AG04449 (cell line): ENCODE measurements at regions of chr19 and their contacts with region 1.

Region 1: GRCh38 chr19:2475702-2476450 is at the start of gene GADD45B:
- DNase-seq: peak; percentile 82
- H3K4me3 ChIP-seq: peak within 1 kb of the TSS; percentile 100
- CTCF ChIP-seq: no peak

Region 2: GRCh38 chr19:2438178-2438864 is 37.6 kb before region 1 on chr19:
- CTCF ChIA-PET with region 1: no interaction called
- POLR2A ChIA-PET with region 1: no interaction called
- DNase-seq: no peak
- H3K4me3 ChIP-seq: no peak overlapping the region
- CTCF ChIP-seq: no peak

Region 3: GRCh38 chr19:2455851-2456570 is 19.9 kb before region 1 on chr19:
- CTCF ChIA-PET with region 1: interaction called, 6 read pairs
- POLR2A ChIA-PET with region 1: interaction called, 27 read pairs
- DNase-seq: no peak
- H3K4me3 ChIP-seq: peak overlapping the region; percentile 81
- CTCF ChIP-seq: no peak

Region 4: DNA sequence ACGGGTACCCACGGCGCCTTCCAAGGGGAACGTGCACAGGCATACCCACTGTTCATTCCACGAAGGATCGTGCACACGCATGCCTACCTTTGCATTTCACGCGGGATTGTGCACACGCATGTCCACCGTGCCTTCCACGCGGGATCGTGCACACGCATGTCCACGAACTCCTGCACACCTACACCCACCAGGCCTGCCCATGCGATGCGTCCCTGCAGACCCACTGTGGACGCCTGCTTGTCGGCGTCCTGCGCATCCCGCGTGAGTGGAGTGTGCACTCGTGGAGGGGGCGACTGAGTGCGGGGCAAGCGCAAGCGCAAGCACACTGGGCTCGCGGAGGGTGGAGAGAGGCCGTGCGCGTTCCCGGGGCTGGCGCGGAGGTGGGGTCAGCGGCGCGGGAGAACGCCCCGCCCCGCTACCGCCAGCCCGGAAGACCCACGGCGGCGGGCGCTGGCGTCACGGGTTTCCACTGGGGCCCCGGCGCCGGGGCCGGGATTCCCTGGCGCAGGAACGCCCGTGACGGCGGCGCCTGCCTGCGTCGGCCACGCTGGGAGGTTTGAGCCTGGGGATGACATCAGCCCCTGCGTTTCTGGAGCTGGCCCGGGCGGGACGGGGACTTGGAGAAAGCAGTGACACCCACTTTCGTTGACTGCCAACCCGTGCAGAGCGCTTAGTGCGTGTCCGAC is 18.7 kb after region 1 on chr19:
- CTCF ChIA-PET with region 1: interaction called, 5 read pairs
- POLR2A ChIA-PET with region 1: interaction called, 79 read pairs
- DNase-seq: no peak
- H3K4me3 ChIP-seq: peak overlapping the region; percentile 65
- CTCF ChIP-seq: no peak

Region 5: DNA sequence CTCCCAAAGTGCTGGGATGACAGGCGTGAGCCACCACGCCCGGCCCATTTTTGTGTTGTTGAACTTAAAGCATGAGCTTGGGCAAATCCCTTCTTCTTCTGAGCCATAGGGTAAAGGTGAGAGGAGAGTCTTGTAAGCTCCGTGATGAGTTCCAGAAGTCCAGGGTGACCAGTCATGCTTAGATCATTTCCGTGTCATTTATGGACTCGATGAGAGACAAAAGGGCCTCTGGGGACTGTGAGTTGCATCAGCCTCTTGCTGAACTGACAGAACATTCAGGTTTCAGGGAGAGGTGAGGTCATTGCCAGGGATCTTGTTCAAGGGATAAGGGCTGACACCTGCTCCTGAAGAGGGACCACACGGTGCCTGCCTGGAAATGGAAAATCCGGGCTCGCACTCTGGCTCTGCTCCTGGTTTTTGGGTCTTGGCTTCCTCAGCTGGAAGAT is 53.6 kb after region 1 on chr19:
- CTCF ChIA-PET with region 1: interaction called, 3 read pairs
- POLR2A ChIA-PET with region 1: interaction called, 23 read pairs
- DNase-seq: peak; percentile 82
- H3K4me3 ChIP-seq: no peak overlapping the region
- CTCF ChIP-seq: no peak

Region 6: DNA sequence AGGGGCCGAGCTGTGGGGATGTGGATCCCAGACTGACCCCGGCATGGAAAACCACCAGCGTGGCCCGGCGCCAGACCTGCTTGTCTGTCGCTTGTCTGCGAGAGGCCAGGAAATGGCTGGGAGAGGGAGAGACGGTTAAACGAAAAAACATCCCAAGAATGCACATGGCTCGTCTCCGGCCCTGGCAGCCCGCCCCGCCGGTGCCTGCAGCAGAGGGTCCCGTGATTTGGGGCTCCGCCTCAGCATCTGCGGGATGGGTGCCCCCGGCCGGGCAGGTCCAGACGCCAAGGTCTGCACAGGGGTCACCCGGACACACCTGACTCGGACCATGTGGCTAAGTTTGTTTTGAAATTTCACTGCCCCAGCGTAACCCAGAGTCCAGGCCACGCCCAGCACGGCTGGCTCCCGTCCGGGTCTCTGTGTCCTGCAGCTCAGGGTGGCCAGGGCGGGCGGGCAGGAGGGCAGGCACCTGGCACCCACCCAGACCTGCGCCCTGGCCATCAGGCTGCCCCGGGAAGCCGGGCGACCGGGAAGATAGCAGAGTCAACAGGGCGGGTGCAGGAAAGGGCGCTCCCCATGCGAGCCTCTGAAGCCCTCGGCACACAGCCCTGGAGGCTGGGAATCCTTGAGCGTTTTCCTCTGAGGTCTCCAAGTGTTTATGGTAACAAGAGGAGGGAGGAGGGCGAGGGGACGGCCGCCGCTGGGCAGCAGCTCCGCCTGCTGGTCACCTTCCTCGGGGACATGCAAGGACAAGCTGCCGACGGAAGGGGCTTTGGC is 103.2 kb after region 1 on chr19:
- CTCF ChIA-PET with region 1: interaction called, 64 read pairs
- POLR2A ChIA-PET with region 1: interaction called, 240 read pairs
- DNase-seq: peak; percentile 65
- H3K4me3 ChIP-seq: peak overlapping the region; percentile 64
- CTCF ChIP-seq: peak; percentile 98

Region 7: DNA sequence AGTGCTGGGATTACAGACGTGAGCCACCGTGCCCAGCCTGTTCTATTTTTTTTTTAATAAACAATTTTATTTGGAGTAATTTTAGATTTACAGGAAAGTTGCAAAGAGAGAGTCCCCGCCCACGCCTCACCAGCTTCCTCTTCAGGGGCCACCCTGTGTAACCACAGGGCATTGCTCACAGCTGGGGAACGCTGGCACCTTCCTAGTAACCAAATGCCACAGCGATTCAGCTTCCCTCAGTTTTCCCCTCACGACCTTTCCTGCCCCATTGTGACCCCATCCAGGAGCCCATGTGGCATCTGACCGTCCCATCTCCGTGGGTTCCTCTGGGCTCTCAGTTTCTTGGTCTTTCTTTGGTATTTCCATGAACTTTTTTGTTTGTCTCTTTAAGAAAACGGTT is 142.7 kb after region 1 on chr19:
- CTCF ChIA-PET with region 1: interaction called, 232 read pairs
- POLR2A ChIA-PET with region 1: interaction called, 25 read pairs
- DNase-seq: no peak
- H3K4me3 ChIP-seq: no peak overlapping the region
- CTCF ChIP-seq: no peak

Region 8: DNA sequence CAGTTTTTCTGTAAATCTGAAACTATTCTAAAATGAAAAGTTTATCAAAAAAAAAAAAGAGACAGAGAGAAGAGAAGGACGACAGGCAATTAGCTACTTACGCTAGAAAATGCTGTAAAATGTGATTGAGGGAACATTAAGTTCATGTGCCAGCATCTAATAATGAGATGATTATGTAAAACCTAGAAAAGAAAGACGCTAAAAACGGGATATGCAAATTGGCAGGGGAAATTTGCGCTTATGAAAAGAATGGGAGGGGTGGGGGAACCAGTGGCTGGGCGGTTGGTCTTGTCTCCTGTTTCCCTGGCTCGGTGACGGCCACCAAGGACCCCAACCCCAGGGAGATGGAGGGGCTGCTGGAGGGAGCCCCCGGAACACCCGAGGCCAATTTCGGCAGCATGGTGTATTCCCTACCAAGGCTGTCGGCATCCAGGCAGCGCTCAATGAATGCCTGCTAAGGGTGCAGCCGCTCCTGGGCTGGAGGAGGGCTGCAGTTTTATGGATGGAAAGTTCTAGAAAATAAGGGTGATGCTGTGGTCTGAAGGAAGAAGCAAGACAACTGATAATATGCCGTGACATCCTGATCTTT is 192.4 kb after region 1 on chr19:
- CTCF ChIA-PET with region 1: no interaction called
- POLR2A ChIA-PET with region 1: no interaction called
- DNase-seq: no peak
- H3K4me3 ChIP-seq: no peak overlapping the region
- CTCF ChIP-seq: no peak